ENCODE measurements at regions of chr14 and their contacts with region 1.

Region 1: DNA sequence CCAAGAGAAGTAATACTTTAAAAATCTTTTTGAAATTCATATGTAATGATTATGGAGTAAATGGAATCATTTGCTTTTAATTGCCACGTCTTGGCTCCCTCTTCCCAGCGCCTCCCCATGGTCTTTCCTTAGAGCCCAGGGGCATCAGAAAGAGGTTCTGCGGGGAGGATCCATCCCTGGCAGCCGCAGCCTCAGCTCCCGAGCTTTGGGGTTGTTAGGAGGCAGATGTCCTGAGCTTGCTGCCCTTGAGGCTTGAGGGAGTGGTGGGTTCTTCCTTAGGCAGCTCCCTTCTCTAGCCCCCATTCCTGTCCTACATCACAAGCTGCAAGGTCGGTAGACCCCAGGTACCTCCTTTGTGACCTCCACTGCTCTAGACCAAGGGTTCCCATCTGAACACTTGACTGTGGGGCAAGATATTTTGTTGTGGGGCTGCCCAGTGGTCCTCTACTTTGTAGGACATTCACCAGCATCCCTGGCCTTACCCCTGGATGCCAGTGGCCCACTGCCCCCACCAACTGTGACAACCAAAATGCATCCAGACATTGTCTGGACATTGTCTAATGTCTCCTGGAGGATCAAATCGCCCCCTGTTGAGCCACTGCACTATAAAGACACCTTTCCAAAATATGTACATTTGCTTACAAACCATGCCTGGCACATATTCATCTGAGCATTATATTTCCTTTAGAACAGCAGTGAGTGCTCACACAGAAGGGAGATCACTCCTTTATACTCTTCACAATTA is 6.3 kb downstream of the PPP2R5C start:
- DNase-seq: no peak
- ATAC-seq: no peak
- H3K4me3 Mint-ChIP-seq: no peak overlapping the region
- H3K27ac Mint-ChIP-seq: no peak overlapping the region
- H3K4me1 Mint-ChIP-seq: peaks cover 16% of the 10 kb centered on the region
- H3K27me3 Mint-ChIP-seq: no peaks in the 10 kb centered on the region

Region 2: GRCh38 chr14:101654051-101654450 is 113.7 kb before region 1 on chr14:
- CTCF ChIA-PET with region 1: no interaction called
- DNase-seq: no peak
- ATAC-seq: no peak
- H3K4me3 Mint-ChIP-seq: no peak overlapping the region
- H3K27ac Mint-ChIP-seq: no peak overlapping the region
- H3K4me1 Mint-ChIP-seq: no peaks in the 10 kb centered on the region
- H3K27me3 Mint-ChIP-seq: peaks cover 81% of the 10 kb centered on the region

Region 3: DNA sequence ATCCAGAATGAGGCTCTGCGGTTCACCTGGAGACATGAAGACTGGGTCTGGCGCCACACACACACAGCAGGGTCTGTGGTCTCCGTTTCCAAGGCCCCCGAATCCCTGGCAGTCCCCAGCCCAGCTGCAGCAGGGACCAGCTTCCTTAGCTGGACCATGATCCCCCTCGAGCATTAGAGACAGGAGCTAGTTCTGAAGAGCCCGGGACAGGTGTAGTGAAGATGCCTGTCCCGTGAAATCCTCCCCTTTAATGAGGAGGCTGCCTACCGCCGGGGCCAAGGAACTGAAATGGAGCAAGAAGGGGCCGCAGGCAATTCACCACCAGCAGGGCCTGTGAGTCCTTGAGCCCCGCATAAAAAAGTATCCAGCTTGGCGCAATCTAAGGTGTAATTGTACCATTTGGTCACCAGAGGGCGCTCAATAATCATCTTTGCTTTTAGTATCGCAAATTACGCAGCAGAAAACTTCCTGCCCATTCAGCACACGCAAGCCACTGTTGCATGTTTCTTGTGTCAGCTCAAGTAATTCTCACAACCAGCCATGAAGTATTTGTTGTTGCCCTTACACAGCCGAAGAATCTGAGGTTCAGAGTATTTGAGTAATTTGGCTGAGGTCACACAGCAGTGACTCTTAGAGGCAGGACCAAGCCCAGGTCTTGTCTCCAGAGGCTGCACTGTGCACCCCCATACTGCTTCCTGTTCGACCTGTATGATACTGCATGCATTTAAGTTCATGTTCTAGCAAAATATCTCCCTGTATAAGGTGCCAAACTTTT is 60.5 kb before region 1 on chr14:
- CTCF ChIA-PET with region 1: interaction called, 37 read pairs
- DNase-seq: peak; percentile 74
- ATAC-seq: peak; percentile 63
- H3K4me3 Mint-ChIP-seq: peak overlapping the region; percentile 42
- H3K27ac Mint-ChIP-seq: peak overlapping the region; percentile 90
- H3K4me1 Mint-ChIP-seq: peaks cover 32% of the 10 kb centered on the region
- H3K27me3 Mint-ChIP-seq: peaks cover 11% of the 10 kb centered on the region

Region 4: DNA sequence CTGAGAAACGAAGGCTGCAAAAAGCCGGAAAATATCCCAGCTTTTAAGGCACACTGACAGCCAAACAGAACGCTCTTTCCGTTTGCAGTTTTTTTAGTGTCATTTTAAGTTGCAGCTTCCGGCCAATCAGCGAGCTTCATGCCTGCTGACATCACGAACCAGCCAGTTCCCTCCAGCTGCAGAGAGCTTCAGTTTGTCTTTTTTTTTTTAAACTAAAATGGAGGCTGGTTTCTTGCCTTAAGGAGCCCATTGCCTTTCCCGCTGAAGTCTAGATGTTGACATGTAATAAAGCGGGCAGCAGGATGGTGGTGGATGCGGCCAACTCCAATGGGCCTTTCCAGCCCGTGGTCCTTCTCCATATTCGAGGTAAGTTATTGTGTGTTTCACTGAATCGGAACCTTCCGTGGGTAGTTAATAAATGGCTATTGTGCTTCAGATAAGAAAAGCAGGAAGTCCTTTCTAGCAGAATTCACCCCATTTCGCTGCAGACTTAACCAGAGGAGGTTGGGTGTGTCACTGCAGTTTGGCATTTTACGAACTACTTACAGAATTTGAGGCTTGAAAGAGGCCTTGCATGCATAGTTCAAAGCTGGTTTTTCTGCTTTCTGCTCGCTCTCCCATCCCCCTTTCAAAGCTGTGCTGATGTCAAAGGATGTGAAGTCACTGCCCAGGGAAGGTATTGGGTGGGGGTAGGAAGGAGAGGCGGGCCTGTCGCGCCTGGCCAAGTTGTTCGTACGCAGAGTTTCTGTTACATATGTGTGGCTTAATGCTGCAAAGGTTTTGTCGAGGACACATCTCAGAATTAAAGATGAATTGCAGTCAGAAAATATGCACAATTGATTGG is 42.1 kb after region 1 on chr14:
- CTCF ChIA-PET with region 1: interaction called, 14 read pairs
- DNase-seq: peak; percentile 94
- ATAC-seq: peak; percentile 88
- H3K4me3 Mint-ChIP-seq: peak overlapping the region; percentile 87
- H3K27ac Mint-ChIP-seq: peak overlapping the region; percentile 95
- H3K4me1 Mint-ChIP-seq: peaks cover 40% of the 10 kb centered on the region
- H3K27me3 Mint-ChIP-seq: no peaks in the 10 kb centered on the region

Region 5: GRCh38 chr14:101823511-101824120 is 55.8 kb after region 1 on chr14:
- CTCF ChIA-PET with region 1: interaction called, 29 read pairs
- DNase-seq: peak; percentile 85
- ATAC-seq: peak; percentile 57
- H3K4me3 Mint-ChIP-seq: peak overlapping the region; percentile 78
- H3K27ac Mint-ChIP-seq: peak overlapping the region; percentile 98
- H3K4me1 Mint-ChIP-seq: peaks cover 81% of the 10 kb centered on the region
- H3K27me3 Mint-ChIP-seq: no peaks in the 10 kb centered on the region

Region 6: DNA sequence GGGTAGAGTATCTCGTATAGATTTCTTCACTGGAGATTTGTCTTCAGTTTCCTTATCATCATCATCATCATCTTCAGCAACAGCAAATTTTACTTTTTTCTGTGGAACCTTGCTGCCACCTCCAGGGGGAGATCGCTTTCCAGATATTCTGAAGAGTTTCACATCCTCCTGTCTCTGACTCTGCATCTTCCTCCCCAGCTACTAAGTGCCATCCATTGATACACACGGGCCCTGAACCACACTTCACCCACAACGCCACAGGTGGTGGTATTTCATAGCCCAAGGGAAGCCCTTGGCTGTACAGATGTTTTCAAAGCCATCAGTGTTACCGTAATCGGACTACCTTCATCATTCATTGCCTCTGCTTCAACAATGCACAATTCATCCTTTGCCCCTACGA is 75.9 kb after region 1 on chr14:
- CTCF ChIA-PET with region 1: interaction called, 60 read pairs
- DNase-seq: peak; percentile 74
- ATAC-seq: peak; percentile 63
- H3K4me3 Mint-ChIP-seq: no peak overlapping the region
- H3K27ac Mint-ChIP-seq: peak overlapping the region; percentile 67
- H3K4me1 Mint-ChIP-seq: peaks cover 81% of the 10 kb centered on the region
- H3K27me3 Mint-ChIP-seq: no peaks in the 10 kb centered on the region

Region 7: GRCh38 chr14:101964297-101965144 is 196.7 kb after region 1 on chr14 and contains the start of gene DYNC1H1:
- CTCF ChIA-PET with region 1: interaction called, 29 read pairs
- DNase-seq: peak; percentile 92
- ATAC-seq: peak; percentile 86
- H3K4me3 Mint-ChIP-seq: peak within 1 kb of the TSS; percentile 88
- H3K27ac Mint-ChIP-seq: peak within 1 kb of the TSS; percentile 92
- H3K4me1 Mint-ChIP-seq: peaks cover 47% of the 10 kb centered on the region
- H3K27me3 Mint-ChIP-seq: peaks cover 2% of the 10 kb centered on the region
- total RNA-seq, gene DYNC1H1: 308 to 325 TPM

Region 8: GRCh38 chr14:102262929-102263462 is 495.2 kb after region 1 on chr14:
- CTCF ChIA-PET with region 1: no interaction called
- DNase-seq: no peak
- ATAC-seq: no peak
- H3K4me3 Mint-ChIP-seq: no peak overlapping the region
- H3K27ac Mint-ChIP-seq: no peak overlapping the region
- H3K4me1 Mint-ChIP-seq: no peaks in the 10 kb centered on the region
- H3K27me3 Mint-ChIP-seq: no peaks in the 10 kb centered on the region

Region 9: DNA sequence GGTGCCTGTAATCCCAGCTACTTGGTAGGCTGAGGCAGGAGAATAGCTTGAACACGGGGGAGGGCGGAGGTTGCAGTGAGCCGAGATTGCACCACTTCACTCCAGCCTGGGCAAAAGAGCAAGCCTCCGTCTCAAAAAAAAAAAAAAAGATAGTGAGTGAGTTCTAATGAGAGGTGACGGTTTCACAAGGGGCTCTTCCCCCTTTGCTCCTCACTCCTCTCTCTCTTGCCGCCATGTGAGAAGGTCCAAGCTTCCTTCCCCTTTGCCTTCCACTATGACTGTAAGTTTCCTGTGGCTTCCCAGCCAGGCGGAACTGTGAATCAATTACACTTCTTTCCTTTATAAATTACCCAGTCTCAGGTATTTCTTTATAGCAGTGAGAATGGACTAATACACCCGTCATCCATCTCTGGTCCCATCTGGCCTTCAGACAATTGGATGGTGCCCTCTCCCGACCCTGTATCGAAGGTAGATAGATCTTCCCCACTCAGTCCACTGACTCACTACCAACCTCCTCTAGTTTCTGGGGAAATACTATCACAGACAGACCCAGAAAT is 797.6 kb after region 1 on chr14:
- CTCF ChIA-PET with region 1: no interaction called
- DNase-seq: no peak
- ATAC-seq: no peak
- H3K4me3 Mint-ChIP-seq: no peak overlapping the region
- H3K27ac Mint-ChIP-seq: no peak overlapping the region
- H3K4me1 Mint-ChIP-seq: peaks cover 15% of the 10 kb centered on the region
- H3K27me3 Mint-ChIP-seq: no peaks in the 10 kb centered on the region